ENCODE measurements at regions of chr4 and their contacts with region 1.

Region 1: DNA sequence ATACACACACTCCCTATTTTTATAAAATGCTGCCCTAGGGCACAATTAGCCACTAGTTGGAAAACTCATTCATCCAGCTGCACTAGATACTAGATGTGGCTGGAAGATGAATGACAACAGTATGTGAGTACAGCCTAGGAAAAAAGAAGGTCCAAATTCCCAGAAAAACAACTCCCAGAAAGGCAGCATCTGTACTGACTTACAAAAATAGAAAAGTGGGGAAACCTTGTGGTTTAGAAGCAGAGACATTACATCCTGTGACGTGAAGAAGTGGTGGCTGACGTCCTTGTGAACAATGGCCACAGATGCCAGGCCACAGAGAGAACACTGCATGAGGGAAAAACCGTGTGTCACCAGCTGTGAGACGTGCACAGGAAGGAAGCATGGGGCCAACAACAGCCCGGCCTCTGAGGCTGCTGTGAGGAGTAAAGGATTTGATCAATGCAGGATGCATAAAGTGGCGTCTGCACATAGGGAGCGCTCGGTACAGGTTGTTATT is 81.2 kb downstream of the SPRY1 start:
- DNase-seq: peak; percentile 91
- H3K4me3 Mint-ChIP-seq: peak overlapping the region; percentile 27
- H3K27ac Mint-ChIP-seq: peak overlapping the region; percentile 68
- H3K4me1 Mint-ChIP-seq: peaks cover 45% of the 10 kb centered on the region
- H3K27me3 Mint-ChIP-seq: no peaks in the 10 kb centered on the region

Region 2: GRCh38 chr4:122131562-122132157 is 1346.1 kb before region 1 on chr4:
- intact Hi-C with region 1: no loop called
- DNase-seq: peak; percentile 79
- H3K4me3 Mint-ChIP-seq: peak overlapping the region; percentile 52
- H3K27ac Mint-ChIP-seq: peak overlapping the region; percentile 70
- H3K4me1 Mint-ChIP-seq: peaks cover 20% of the 10 kb centered on the region
- H3K27me3 Mint-ChIP-seq: no peaks in the 10 kb centered on the region

Region 3: GRCh38 chr4:123412091-123412505 is 65.7 kb before region 1 on chr4:
- intact Hi-C with region 1: loop called (anchors 2 kb)
- DNase-seq: peak; percentile 72
- H3K4me3 Mint-ChIP-seq: peak overlapping the region; percentile 76
- H3K27ac Mint-ChIP-seq: peak overlapping the region; percentile 91
- H3K4me1 Mint-ChIP-seq: peaks cover 42% of the 10 kb centered on the region
- H3K27me3 Mint-ChIP-seq: no peaks in the 10 kb centered on the region

Region 4: DNA sequence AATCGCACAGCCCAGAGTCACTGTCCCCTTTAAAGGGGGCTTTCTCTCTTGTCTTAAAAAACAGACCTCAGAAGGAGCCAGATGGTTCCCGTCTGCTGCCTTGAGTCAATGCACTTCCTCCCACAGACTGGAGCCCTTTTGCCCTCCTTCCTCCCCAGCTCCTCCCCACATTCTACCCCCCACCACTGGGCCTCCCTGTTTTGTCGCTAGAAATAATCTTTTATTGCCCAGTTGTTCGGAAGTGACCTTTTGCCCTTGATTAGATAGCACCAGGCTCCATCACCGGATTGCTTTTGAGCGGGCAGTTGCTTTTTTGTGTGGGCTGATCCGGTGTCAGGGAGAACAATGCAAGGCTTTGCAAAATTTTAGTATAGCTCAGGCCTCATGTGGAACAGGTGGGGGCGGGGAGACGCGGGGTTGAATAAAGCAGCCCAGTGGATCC is 33.4 kb before region 1 on chr4:
- intact Hi-C with region 1: loop called (anchors 1 kb)
- DNase-seq: peak; percentile 81
- H3K4me3 Mint-ChIP-seq: peak overlapping the region; percentile 82
- H3K27ac Mint-ChIP-seq: peak overlapping the region; percentile 96
- H3K4me1 Mint-ChIP-seq: peaks cover 24% of the 10 kb centered on the region
- H3K27me3 Mint-ChIP-seq: no peaks in the 10 kb centered on the region

Region 5: DNA sequence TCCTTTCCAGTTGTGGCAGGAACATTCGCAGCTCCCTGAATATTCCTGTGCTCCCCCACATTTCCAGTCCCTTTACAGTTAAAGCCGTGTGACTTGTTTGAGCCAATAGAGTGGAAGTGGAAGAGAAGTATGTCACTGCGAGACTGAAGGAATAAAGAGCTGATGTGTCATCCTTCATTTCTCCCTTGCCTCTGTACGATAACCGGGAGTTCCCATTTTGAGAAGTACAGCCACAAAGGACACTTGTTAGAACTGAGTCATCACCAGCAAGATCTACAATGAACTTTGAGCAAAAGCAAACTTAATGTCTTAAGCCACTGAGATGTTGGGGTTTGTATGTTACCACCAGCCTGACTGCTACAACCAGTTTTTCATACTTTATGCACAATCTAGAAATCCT is 11.2 kb after region 1 on chr4:
- intact Hi-C with region 1: loop called (anchors 1 kb)
- DNase-seq: peak; percentile 63
- H3K4me3 Mint-ChIP-seq: no peak overlapping the region
- H3K27ac Mint-ChIP-seq: peak overlapping the region; percentile 72
- H3K4me1 Mint-ChIP-seq: peaks cover 14% of the 10 kb centered on the region
- H3K27me3 Mint-ChIP-seq: no peaks in the 10 kb centered on the region

Measured in activated CD4-positive, alpha-beta T cell treated with anti-CD3 and anti-CD28 coated beads, Interleukin-2, amount 10 ng/mL, durations not matched to agents 24 days and 14 days (primary cell).